ENCODE measurements at regions of chr19 and their contacts with region 1.

Region 1: GRCh38 chr19:32674959-32675719 is at the start of gene ANKRD27:
- DNase-seq: peak; percentile 99
- H3K4me3 ChIP-seq: peak within 1 kb of the TSS; percentile 84
- H3K27ac ChIP-seq: peak within 1 kb of the TSS; percentile 72
- H3K4me1 ChIP-seq: peaks cover 16% of the 10 kb centered on the region
- H3K27me3 ChIP-seq: peaks cover 21% of the 10 kb centered on the region
- CTCF ChIP-seq: no peak
- total RNA-seq, gene ANKRD27: 36.6 to 37.1 TPM

Region 2: DNA sequence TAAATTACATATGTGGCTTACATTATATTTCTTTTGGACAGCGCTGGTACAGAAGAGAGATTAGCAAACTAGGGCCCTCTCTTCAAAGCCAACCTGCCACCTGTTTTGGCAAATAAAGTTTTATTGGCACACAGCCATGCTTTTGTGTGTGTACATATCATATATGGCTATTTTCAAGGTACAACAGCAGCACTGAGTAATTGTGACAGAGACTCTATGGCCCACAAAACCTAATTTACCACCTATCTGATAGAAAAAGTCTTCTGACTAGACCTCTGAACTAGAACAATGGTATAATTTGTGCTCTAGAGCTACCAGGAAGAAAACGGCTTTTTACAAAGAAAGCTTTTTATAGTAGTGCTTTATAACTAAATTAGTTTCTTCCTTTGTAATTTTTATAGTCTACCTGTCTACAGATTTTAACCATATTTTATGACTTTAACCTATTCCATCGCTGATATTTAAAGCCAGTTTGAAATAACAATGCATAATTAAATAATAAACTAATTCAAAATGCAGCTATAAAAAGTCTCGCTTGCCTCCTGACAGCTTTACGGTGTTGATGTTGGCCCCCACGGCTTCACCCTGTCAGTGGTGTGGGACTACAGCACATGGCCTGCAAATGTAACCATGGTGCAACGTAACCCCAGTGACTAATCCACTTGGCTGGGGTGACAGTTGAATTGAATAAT is 287.3 kb before region 1 on chr19:
- intact Hi-C with region 1: loop called (anchors 10 kb)
- DNase-seq: peak; percentile 68
- H3K4me3 ChIP-seq: no peak overlapping the region
- H3K27ac ChIP-seq: no peak overlapping the region
- H3K4me1 ChIP-seq: peaks cover 7% of the 10 kb centered on the region
- H3K27me3 ChIP-seq: no peaks in the 10 kb centered on the region
- CTCF ChIP-seq: no peak

Region 3: GRCh38 chr19:32580901-32581703 is 94.0 kb before region 1 on chr19 and contains the start of gene PDCD5:
- intact Hi-C with region 1: loop called (anchors 10 kb)
- DNase-seq: peak; percentile 97
- H3K4me3 ChIP-seq: peak within 1 kb of the TSS; percentile 71
- H3K27ac ChIP-seq: peak within 1 kb of the TSS; percentile 81
- H3K4me1 ChIP-seq: peaks cover 3% of the 10 kb centered on the region
- H3K27me3 ChIP-seq: no peaks in the 10 kb centered on the region
- CTCF ChIP-seq: no peak
- total RNA-seq, gene PDCD5: 66.7 to 70.8 TPM

Region 4: DNA sequence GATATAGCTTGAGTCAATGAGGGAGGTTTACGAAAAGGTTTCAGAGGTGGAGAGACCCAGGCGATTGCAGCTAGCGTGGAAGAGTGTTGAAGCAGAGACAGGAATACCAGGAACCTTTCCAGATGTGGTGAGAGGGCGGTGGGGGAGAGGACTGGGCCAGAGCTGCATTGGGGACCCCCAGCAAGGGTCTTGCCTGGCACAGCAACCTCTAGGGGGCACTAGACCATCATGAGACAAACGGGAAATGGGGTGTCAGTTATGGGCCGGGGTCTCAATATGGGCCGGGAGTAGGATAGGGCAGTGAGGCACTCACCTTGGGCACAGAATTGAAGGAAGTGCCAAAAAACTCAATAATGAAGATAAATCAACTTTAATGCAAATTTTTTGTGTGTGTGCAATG is 516.9 kb after region 1 on chr19:
- intact Hi-C with region 1: no loop called
- DNase-seq: no peak
- H3K4me3 ChIP-seq: no peak overlapping the region
- H3K27ac ChIP-seq: no peak overlapping the region
- H3K4me1 ChIP-seq: no peaks in the 10 kb centered on the region
- H3K27me3 ChIP-seq: no peaks in the 10 kb centered on the region
- CTCF ChIP-seq: no peak

Measured in colonic mucosa (tissue), 4 donors.